ENCODE measurements at regions of chr14 and their contacts with region 1.

Region 1: DNA sequence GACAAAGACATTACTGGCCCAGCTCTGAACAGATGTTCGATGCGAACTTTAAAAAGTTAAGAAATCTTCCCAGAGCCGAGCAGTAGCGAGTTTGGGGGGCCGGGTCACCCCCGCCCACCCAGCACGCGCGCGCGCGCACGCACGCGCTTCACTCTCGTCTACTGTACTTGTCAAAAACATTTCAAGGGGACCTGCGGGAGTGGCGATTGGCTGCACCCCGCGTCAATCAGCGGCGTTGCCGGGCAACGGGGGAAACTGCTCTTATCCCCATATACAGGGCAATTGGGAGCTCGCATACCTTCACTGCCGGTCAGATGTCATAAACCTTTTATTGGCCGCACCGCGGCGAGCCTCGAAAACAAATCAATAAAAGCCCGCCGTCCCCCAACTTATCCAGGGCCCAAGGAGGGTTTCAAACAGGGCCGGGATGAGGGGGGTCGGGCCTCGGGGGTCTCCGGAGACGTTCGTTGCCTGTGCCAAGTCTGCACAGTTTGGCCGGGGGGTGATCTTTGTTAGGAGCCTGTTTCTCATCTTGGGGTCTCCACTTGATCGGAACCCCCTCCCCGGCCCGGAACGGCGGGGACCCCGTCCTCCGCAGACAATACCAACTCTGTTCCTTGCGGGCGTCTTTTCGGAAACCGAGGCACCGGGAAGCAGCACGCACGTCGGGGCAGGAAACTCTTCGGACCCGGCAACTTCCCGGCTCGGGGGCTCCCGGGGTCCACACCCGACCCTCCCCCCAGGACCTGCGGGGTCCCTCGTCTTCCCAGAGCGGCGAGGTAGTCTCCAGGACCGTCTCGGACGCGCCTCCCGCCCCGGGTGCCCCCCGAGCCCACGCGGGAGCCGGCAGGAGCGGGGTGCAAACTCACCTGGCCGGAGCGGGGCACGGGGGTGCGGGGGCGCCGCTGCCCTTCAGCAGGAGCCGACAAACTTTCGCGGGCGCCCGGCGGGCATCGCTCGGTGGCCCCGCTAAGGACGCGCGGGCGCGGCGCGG is 734 bp downstream of the FOXN3 start:
- DNase-seq: peak; percentile 98
- H3K4me3 Mint-ChIP-seq: peak overlapping the region; percentile 90
- H3K27ac Mint-ChIP-seq: peak overlapping the region; percentile 82
- H3K4me1 Mint-ChIP-seq: peaks cover 20% of the 10 kb centered on the region
- H3K27me3 Mint-ChIP-seq: no peaks in the 10 kb centered on the region
- CTCF ChIP-seq: no peak

Region 2: DNA sequence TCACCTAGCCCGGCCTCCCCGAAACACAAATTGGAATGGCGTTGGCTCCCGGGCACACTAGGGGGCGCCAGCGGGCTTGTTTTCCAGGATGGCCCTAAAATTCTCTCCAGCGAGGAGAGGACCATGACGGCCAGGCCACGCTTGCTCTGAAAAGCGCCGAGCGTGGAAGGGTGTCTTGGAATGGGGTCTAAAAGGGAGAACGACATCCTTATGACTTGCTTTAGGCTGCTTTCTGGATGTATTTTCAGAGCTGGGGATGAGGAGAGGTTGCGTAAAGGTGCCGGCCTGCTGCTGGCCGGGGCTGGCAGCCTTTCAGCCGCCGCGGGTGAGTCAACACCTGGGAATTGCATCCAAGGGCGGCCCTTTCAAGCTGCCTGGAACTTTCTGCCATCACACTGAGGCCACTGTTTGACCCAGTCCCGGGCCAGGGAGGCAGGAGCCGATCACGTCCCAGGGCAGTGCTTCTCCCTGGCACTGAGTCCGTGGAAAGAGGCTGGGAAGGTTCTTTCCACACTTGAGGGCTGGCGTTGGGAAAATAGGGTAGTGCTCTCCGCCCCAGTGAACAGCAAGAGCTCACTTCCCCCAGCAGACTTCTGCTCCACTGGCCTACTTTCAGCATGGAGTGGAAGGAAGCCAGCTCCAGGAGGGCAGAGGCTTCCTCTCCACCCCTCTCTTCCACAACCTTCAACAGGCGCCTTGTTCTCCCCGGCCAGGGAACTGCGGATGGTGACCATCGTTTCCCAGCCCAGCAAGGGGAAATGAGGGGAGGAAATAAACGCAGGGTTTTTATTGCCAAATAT is 375.6 kb before region 1 on chr14:
- CTCF ChIA-PET with region 1: interaction called, 3 read pairs
- POLR2A ChIA-PET with region 1: interaction called, 15 read pairs
- intact Hi-C with region 1: loop called (anchors 1 kb)
- DNase-seq: peak; percentile 91
- H3K4me3 Mint-ChIP-seq: peak overlapping the region; percentile 68
- H3K27ac Mint-ChIP-seq: peak overlapping the region; percentile 24
- H3K4me1 Mint-ChIP-seq: peaks cover 8% of the 10 kb centered on the region
- H3K27me3 Mint-ChIP-seq: no peaks in the 10 kb centered on the region
- CTCF ChIP-seq: peak; percentile 98

Region 3: GRCh38 chr14:89340200-89341181 is 75.8 kb before region 1 on chr14:
- CTCF ChIA-PET with region 1: no interaction called
- POLR2A ChIA-PET with region 1: interaction called, 13 read pairs
- intact Hi-C with region 1: no loop called
- DNase-seq: peak; percentile 49
- H3K4me3 Mint-ChIP-seq: no peak overlapping the region
- H3K27ac Mint-ChIP-seq: peak overlapping the region; percentile 68
- H3K4me1 Mint-ChIP-seq: peaks cover 17% of the 10 kb centered on the region
- H3K27me3 Mint-ChIP-seq: no peaks in the 10 kb centered on the region
- CTCF ChIP-seq: no peak

Region 4: DNA sequence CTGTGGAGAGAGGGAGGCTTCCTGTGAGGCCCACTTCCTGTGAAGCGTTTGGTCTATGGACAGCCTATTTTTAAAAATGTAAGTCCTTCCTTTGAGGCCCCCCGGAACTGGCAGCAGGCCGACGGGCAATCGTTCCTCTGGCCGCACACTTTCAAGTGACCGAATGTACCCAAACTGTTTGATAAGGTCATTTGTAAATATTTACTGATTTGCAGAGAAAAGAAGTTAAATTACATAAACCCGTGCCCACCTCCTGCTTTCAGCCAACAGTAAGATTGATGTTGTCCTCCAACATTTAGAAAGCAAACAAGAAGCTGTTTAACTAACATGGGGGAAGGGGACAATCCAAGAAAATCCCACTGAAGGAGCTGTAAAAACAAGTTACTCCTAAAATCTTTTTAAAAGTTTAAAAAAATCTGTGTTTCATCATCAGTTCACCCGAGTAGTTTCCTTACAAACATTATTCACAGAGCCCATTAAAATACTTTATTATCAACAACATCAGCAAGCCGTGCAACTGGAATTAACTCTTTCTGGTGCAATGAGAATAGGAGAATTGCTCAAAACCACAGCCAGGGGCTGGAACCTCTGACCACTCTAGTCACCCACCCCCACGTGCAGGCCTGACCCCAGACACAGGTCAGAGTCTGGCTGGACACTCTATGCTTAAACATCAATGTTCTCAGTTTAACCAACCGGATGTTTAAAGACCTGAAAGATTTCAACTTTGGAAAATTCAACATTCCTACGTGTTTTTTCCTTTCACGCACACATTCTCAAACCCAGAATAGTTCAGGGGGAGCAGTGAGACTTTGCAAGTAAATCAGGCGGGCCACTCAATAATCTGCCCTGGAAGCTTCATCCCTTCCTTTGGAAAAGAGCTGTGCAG is 64.5 kb before region 1 on chr14:
- CTCF ChIA-PET with region 1: no interaction called
- POLR2A ChIA-PET with region 1: no interaction called
- intact Hi-C with region 1: no loop called
- DNase-seq: no peak
- H3K4me3 Mint-ChIP-seq: no peak overlapping the region
- H3K27ac Mint-ChIP-seq: no peak overlapping the region
- H3K4me1 Mint-ChIP-seq: no peaks in the 10 kb centered on the region
- H3K27me3 Mint-ChIP-seq: no peaks in the 10 kb centered on the region
- CTCF ChIP-seq: no peak

Region 5: DNA sequence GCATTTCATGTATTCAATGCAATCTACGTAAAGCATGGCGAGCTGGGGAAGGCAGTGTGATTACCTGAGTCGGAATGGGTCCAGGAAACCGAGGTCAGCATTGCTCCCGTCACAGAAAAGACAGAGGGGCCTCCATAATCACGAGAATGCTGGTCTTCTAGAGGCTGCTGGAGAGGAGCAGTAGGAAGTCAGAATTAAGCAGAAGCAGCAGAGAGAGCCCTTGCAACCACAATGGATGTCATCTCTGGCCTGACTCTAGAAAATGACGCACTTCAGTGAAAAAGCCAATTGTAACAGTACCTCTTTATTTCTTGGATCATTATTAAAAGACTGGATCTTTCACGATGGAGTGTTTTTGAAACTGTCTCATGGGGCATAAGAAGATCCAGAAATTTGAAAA is 70.2 kb after region 1 on chr14:
- CTCF ChIA-PET with region 1: no interaction called
- POLR2A ChIA-PET with region 1: no interaction called
- intact Hi-C with region 1: no loop called
- DNase-seq: no peak
- H3K4me3 Mint-ChIP-seq: no peak overlapping the region
- H3K27ac Mint-ChIP-seq: no peak overlapping the region
- H3K4me1 Mint-ChIP-seq: no peaks in the 10 kb centered on the region
- H3K27me3 Mint-ChIP-seq: no peaks in the 10 kb centered on the region
- CTCF ChIP-seq: no peak

Region 6: DNA sequence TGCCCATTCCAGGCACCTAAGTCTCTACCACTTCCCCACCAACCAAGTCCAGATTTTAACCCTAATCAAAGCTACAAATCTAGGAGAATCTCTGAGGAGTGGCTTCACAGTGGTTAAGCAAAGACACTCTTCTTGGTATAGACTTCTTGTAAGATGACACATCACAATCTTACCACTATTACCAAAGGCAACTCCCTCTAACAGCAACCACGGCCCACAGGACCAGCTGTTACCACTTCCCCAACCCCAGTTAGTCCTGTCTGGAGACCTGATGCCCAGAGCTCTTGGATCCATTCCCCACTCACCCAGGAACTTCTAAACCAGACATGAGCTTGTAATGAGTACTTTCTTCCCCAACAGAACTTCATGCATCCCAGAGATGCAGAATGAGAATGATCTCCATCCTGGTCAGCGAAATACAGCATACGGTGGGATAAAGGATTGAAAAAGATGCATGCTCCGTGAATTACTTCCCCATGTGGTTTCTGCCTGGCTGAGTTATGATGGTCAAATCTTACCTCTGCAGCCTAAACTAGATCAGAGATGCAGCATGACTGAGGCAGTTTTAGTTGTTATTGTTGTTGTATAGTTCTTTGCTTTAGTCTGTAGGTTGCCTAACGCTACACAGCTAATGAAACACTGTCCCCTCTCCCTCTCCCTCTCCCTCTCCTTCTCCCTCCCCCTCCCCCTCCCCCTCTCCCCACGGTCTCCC is 88.5 kb after region 1 on chr14:
- CTCF ChIA-PET with region 1: interaction called, 7 read pairs
- POLR2A ChIA-PET with region 1: interaction called, 4 read pairs
- intact Hi-C with region 1: loop called (anchors 2 kb)
- DNase-seq: no peak
- H3K4me3 Mint-ChIP-seq: no peak overlapping the region
- H3K27ac Mint-ChIP-seq: peak overlapping the region; percentile 75
- H3K4me1 Mint-ChIP-seq: peaks cover 27% of the 10 kb centered on the region
- H3K27me3 Mint-ChIP-seq: no peaks in the 10 kb centered on the region
- CTCF ChIP-seq: no peak

Region 7: GRCh38 chr14:89618811-89619551 is 202.7 kb after region 1 on chr14:
- CTCF ChIA-PET with region 1: no interaction called
- POLR2A ChIA-PET with region 1: interaction called, 4 read pairs
- intact Hi-C with region 1: loop called (anchors 2 kb)
- DNase-seq: peak; percentile 57
- H3K4me3 Mint-ChIP-seq: peak overlapping the region; percentile 77
- H3K27ac Mint-ChIP-seq: peak overlapping the region; percentile 39
- H3K4me1 Mint-ChIP-seq: peaks cover 7% of the 10 kb centered on the region
- H3K27me3 Mint-ChIP-seq: no peaks in the 10 kb centered on the region
- CTCF ChIP-seq: no peak

Region 8: DNA sequence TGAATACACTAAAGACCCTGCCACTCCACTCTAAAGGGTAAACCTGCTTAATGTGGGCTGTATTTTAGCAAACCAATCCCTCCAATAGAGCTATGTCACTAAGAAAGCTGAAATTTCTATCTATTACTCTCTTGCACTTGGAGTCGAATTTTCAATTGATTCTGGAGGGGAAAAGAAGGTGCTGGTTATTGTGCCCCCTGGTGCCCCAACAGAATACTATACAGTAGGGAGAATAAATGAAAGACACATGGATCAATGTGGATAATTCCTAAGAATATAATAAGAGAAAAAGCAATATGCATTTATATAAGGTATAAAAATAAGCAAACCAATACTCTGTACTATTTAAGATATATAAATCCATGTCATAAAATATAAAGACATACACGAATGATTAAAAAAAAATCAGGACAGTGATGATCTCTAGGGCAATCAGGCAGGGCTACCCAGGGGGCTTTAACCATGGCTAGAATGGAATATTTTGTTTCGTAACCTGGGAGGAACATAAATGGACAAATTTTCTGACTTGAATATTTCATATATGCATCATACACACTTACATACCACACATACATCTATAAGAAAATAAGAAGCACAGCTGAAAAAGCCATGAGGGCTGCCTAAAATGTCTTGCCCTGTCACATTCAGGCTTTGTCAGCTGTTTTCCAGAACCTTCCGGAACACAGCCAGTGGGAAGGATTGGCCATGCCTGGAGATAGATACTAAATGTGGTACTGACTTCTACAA is 483.8 kb after region 1 on chr14:
- CTCF ChIA-PET with region 1: no interaction called
- POLR2A ChIA-PET with region 1: interaction called, 3 read pairs
- intact Hi-C with region 1: loop called (anchors 5 kb)
- DNase-seq: peak; percentile 35
- H3K4me3 Mint-ChIP-seq: no peak overlapping the region
- H3K27ac Mint-ChIP-seq: no peak overlapping the region
- H3K4me1 Mint-ChIP-seq: no peaks in the 10 kb centered on the region
- H3K27me3 Mint-ChIP-seq: no peaks in the 10 kb centered on the region
- CTCF ChIP-seq: peak; percentile 43

Measured in MCF 10A (cell line).